Mammary epithelial cell (primary cell): ENCODE measurements at regions of chr4 and their contacts with region 1.

Region 1: GRCh38 chr4:52234561-52235440 is 183.7 kb downstream of the SPATA18 start:
- DNase-seq: peak; percentile 41
- H3K4me3 ChIP-seq: no peak overlapping the region
- H3K27ac ChIP-seq: no peak overlapping the region
- H3K4me1 ChIP-seq: no peaks in the 10 kb centered on the region
- H3K27me3 ChIP-seq: peaks cover 5% of the 10 kb centered on the region
- CTCF ChIP-seq: peak; percentile 58 to 68

Region 2: DNA sequence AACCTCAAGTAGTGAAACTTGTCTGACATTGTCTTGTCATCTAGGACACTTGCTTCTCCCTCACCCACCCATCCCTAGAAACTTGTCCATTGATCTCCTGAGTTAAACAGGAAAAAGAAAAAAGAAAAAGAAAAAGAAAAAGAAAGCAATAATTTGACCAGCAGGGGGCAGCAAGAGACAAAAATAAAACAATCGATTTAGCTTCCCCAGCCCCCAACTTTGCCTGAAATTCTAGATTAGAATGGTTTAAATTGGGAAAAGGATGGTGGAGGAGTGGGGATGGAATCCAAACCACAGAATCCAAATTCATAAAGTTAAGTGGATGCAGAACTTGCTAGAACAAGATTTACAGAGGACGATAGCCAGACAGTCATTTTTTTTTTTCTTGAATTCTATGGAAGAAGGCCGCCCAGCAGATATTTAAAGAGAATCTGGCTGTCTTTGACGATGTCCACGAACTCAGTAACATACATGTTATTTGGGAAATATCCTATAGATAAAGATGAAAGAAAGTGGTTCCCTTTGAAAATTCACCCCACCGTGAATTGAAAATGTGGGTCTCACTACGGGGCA is 141.4 kb after region 1 on chr4:
- CTCF ChIA-PET with region 1: no interaction called
- dilution Hi-C with region 1: no loop called
- in situ Hi-C with region 1: loop called in 1 of 2 experiments (anchors 10 kb)
- intact Hi-C with region 1: loop called (anchors 1 kb)
- DNase-seq: peak; percentile 29
- H3K4me3 ChIP-seq: no peak overlapping the region
- H3K27ac ChIP-seq: no peak overlapping the region
- H3K4me1 ChIP-seq: no peaks in the 10 kb centered on the region
- H3K27me3 ChIP-seq: no peaks in the 10 kb centered on the region
- CTCF ChIP-seq: peak; percentile 37 to 55